Activated CD8-positive, alpha-beta memory T cell treated with anti-CD3 and anti-CD28 coated beads, Interleukin-2, amount 10 ng/mL, durations not matched to agents 7 days and 5 days (primary cell): ENCODE measurements at regions of chr2 and their contacts with region 1.

Region 1: GRCh38 chr2:70043252-70043875 is 43.9 kb upstream of the PCBP1 start:
- DNase-seq: peak; percentile 91
- ATAC-seq: peak; percentile 83
- H3K4me3 Mint-ChIP-seq: peak overlapping the region; percentile 55
- H3K27ac Mint-ChIP-seq: peak overlapping the region; percentile 98
- H3K4me1 Mint-ChIP-seq: peaks cover 67% of the 10 kb centered on the region
- H3K27me3 Mint-ChIP-seq: no peaks in the 10 kb centered on the region

Region 2: GRCh38 chr2:70062268-70062667 is 18.9 kb after region 1 on chr2:
- CTCF ChIA-PET with region 1: interaction called, 21 read pairs
- DNase-seq: peak; percentile 52
- ATAC-seq: peak; percentile 49
- H3K4me3 Mint-ChIP-seq: no peak overlapping the region
- H3K27ac Mint-ChIP-seq: peak overlapping the region; percentile 60
- H3K4me1 Mint-ChIP-seq: peaks cover 14% of the 10 kb centered on the region
- H3K27me3 Mint-ChIP-seq: no peaks in the 10 kb centered on the region